ENCODE measurements at regions of chr17 and their contacts with region 1.

Region 1: DNA sequence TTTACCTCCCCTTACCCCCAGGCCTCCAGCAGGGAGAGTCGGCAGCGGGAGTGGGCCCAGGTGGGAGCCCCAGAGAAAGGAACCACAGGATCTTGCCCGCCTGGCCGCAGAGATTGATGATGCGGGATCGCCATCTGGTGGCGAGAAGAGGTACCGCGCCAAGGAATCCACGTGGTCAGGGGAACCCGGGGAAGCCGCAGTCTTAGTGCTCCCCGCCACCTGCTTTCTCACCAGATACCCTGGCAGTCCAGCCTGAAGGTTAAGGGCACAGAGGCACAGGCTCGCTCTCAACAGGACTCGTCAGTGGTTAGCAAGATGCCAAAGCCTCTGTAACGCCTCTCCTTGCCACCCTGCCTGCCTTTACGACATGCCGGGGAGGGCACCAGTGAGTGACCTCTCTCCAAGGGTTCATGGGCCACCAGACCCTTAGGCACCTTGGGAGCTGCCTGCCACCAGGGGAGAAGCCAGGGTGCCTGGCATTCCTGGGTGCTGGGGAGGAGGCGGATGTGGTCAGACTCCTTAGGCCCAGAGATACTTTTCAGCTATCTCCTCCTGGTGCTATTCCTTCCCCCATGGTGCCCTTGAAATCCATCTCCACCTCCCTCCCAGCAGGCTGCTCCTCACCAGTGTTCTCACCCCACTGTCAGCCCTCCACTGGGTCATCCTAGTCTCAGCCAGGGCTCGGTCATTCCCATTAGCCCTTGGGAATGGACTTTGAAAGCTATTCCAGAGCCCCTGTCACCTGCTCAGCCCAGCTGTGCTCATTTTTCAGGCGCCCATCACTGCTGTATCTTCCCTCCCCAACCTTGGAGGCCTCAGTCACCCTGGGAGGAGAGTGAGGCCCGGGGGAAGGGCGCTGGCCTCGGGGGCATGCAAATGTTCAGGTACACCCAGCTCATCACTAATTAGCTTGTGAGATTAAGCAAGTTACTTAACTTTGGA is 5.5 kb upstream of the RHBDF2 start:
- DNase-seq: peak; percentile 82
- H3K4me3 ChIP-seq: no peak overlapping the region
- H3K27ac ChIP-seq: no peak overlapping the region
- H3K4me1 ChIP-seq: peaks cover 4% of the 10 kb centered on the region
- H3K27me3 ChIP-seq: no peaks in the 10 kb centered on the region
- CTCF ChIP-seq: peak; percentile 88

Region 2: GRCh38 chr17:76408052-76408849 is 98.4 kb before region 1 on chr17:
- CTCF ChIA-PET with region 1: no interaction called
- POLR2A ChIA-PET with region 1: no interaction called
- intact Hi-C with region 1: loop called (anchors 2 kb)
- DNase-seq: peak; percentile 63
- H3K4me3 ChIP-seq: no peak overlapping the region
- H3K27ac ChIP-seq: no peak overlapping the region
- H3K4me1 ChIP-seq: no peaks in the 10 kb centered on the region
- H3K27me3 ChIP-seq: no peaks in the 10 kb centered on the region
- CTCF ChIP-seq: peak; percentile 91

Region 3: GRCh38 chr17:76466775-76467130 is 39.9 kb before region 1 on chr17:
- CTCF ChIA-PET with region 1: interaction called, 9 read pairs
- POLR2A ChIA-PET with region 1: no interaction called
- intact Hi-C with region 1: loop called (anchors 1 kb)
- DNase-seq: no peak
- H3K4me3 ChIP-seq: no peak overlapping the region
- H3K27ac ChIP-seq: no peak overlapping the region
- H3K4me1 ChIP-seq: peaks cover 10% of the 10 kb centered on the region
- H3K27me3 ChIP-seq: no peaks in the 10 kb centered on the region
- CTCF ChIP-seq: no peak